ENCODE measurements at regions of chr16 and their contacts with region 1.

Region 1: DNA sequence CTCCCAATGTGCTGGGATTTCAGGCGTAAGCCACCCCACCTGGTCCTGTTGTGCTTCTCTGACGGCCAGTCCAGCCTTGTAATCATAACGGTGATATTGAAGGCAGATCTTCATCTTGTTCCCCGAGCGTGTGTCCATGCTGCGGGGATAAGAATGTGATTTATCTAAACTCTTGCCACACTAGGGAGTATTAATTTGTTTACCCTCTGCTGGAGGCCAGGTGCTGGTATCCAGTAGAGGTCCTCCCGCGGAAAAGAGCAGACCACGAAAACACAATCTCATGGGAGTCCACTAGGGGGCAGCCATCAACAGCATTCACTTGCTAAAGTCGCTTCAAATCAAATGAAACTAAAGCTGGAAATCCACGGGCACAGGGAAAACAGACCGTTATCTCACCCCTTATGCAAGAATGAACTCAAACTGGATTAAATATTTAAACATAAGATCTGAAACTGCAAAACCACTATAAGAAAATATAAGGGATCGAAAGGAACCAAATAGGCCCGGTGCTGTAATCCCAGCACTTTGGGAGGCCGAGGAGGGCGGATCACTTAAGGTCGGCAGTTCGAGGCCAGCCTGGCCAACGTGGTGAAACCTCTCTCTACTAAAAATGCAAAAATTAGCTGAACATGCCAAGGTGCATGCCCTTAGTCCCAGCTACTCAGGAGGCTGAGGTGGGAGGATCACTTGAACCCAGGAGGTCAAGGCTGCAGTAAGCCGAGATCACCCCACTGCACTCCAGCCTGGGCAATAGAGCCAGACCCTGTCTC is 22.3 kb upstream of the RBBP6 start:
- DNase-seq: peak; percentile 89
- ATAC-seq: peak; percentile 86
- H3K4me3 ChIP-seq: peak overlapping the region; percentile 44; the same call in 1 of the 2 replicates
- H3K27ac ChIP-seq: no peak overlapping the region
- H3K4me1 ChIP-seq: peaks cover 17% of the 10 kb centered on the region
- H3K27me3 ChIP-seq: no peaks in the 10 kb centered on the region
- CTCF ChIP-seq: peak; percentile 87

Region 2: GRCh38 chr16:24552705-24553246 is 35.7 kb after region 1 on chr16:
- CTCF ChIA-PET with region 1: interaction called, 3 read pairs
- POLR2A ChIA-PET with region 1: no interaction called
- intact Hi-C with region 1: loop called (anchors 5 kb)
- DNase-seq: no peak
- ATAC-seq: no peak
- H3K4me3 ChIP-seq: no peak overlapping the region
- H3K27ac ChIP-seq: no peak overlapping the region
- H3K4me1 ChIP-seq: no peaks in the 10 kb centered on the region
- H3K27me3 ChIP-seq: no peaks in the 10 kb centered on the region
- CTCF ChIP-seq: no peak

Measured in PC-3 (cell line).